Aorta (tissue), 5 donors: ENCODE measurements at regions of chr9 and their contacts with region 1.

Region 1: DNA sequence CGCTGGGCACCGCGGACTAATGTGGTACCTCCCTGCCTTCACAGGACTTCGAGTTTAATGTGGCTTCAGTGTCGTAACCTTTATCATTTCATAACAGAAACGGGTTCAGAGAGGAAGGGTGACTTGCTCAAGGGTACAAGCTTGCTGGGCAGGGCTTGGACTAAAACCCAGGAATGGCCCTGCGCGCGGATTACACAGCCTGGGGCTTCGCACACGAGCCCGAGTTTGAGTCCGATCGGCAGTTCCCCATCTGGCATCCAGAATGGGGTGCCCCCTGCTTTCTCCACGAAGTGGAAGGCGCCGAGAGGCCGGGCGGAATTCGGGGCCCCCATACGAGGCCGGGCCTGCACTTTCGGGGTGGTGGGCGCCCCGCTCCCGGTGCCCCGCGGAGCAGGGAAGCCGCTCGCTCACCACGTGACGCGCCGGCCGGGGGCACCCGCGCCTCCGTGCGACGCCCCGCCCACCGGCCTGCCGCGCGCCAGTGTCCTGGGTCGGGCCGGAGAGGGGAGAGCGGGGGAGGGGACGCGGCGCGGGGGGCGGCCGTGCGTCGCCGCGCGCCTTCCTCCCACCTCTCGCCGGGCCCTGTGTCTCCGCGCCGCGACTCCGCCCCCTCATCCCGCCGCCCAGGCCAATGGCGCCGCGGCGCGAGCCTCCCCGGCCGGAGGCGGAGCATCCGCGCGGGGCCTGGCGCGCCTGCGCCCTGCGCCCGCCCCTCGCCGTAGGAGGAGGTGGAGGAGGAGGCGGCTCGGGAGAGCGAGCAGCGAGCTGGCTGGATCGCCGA is at the start of gene SET:
- DNase-seq: peak; percentile 97
- ATAC-seq: peak; percentile 96
- H3K4me3 ChIP-seq: peak within 1 kb of the TSS; percentile 89 to 98
- H3K27ac ChIP-seq: peak within 1 kb of the TSS; percentile 67 to 77
- H3K4me1 ChIP-seq: no peaks in the 10 kb centered on the region
- H3K27me3 ChIP-seq: no peaks in the 10 kb centered on the region
- total RNA-seq, gene SET: 190 to 195 TPM

Region 2: DNA sequence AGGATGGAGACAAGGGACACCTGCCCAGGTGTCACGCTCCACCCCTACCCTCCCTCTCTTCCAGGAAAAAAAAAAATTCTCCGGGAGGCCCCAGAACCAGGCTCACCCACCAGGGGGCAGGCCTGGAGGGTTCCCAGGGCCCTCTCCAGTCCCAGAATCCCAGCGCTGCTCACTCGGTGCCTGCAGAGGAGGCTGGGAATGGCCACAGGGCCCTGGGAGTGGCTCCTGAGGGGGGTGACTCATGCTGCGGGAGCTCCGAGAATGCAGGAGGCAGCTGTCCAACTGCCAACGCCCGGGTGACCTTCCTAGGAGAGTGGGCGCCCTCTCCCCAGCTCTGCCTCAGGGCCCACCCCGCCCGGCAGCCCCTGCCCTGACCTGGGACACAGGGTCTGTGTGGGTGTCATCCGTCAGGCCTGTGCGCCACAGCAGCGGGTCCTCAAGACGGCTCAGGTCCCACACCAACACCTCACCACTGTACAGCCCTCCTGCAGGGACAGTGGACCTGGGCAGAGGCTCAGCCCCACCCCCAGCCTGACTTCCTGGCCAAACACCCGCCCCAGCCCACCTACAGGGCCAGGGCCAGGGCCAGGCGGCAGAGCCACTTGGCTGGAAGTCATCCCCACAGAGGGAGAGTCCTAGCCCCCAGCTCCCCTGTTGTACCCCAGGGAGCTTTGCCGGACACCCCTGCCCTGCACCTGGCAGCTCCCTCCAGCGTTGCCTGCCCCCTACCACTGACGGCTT is 53.2 kb before region 1 on chr9:
- intact Hi-C with region 1: loop called (anchors 5 kb)
- DNase-seq: peak; percentile 95 to 96
- ATAC-seq: peak; percentile 89
- H3K4me3 ChIP-seq: no peak overlapping the region
- H3K27ac ChIP-seq: peak overlapping the region; percentile 79 to 85
- H3K4me1 ChIP-seq: no peaks in the 10 kb centered on the region
- H3K27me3 ChIP-seq: no peaks in the 10 kb centered on the region

Region 3: DNA sequence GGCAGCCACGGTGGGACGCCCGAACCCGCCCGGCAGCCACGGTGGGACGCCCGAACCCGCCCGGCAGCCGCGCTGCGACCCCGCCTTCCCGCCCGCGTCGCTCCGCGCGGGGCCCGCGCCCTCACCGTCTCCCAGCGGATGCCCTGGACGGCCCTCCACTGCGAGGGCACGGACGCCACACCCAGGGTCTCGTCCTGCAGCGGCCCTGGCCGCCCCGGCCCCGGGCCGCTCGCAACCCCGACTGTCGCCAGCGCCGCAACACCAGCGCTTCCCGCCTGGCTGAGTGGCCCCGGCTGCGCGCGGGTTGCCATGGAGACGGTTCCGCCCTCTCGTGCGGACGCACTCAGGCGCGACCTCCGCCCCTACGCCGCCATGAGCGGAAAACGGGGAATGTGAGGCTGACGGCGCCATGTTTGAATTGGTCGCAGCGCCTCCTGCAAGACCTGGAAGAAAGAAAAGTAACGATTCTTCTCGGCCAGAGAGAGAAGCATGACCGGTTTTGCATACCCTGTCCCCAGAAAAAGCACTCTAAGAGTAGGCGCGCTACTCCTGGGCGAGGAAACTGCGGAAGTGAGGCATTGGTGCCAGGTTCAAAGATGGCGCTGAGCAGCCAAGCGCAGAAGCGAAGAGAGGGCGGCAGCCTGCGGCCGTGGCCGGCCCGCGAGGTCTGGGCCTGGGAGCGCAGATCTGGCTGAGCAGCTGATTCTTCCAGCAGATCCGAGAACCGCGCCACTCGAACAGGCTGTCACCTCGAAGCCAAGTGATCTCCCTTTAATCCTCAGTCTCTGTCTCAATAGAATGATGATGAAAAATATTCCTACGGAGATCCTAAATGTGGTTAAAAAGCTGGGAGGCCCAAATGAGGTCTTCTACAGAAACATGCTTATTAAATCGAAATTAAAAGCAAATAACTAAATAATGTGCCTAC is 32.0 kb before region 1 on chr9 and contains the start of gene DYNC2I2:
- intact Hi-C with region 1: loop called in 1 of 2 experiments (anchors 2 kb)
- DNase-seq: peak; percentile 99
- ATAC-seq: peak; percentile 99
- H3K4me3 ChIP-seq: peak within 1 kb of the TSS; percentile 38 to 62
- H3K27ac ChIP-seq: peak within 1 kb of the TSS; percentile 52 to 98
- H3K4me1 ChIP-seq: no peaks in the 10 kb centered on the region
- H3K27me3 ChIP-seq: no peaks in the 10 kb centered on the region
- total RNA-seq, gene DYNC2I2: 9.0 to 15.3 TPM